Tibial artery (tissue), 4 donors: ENCODE measurements at regions of chr6 and their contacts with region 1.

Region 1: DNA sequence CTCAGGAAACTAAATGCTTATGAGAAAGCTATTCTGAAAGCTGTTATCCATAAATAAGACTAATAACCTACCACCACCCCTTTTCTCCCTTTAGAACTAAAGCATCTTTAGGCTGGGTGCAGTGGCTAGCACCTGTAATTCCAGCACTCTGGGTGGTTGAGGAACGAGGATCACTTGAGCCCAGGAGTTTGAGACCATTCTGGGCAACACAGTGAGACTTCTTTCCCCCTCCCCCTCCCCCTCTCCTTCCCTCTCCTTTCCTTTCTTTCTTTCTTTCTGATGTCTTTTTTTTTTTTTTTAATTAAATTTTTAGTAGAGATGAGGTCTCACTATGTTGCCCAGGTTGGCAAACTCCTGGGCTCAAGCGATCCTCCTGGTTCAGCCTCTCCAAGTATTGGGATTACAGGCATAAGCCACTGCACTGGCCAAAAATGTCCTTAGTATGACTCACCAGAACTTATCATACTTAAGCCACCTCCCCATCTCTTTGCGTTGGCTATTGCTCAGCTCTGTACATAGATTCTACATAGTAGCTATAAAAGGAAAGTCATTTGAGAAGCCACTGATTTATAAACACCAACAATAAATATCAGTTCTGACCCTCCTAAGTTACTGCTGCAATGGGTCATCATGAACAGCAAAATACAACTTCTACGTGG is 54.8 kb upstream of the SPDEF start:
- DNase-seq: no peak
- H3K4me3 ChIP-seq: no peak overlapping the region
- H3K27ac ChIP-seq: peak overlapping the region in 1 of 2 donors; percentile 21
- H3K4me1 ChIP-seq: peaks cover 0 to 26% (median 5%) of the 10 kb centered on the region in 4 donors
- H3K27me3 ChIP-seq: no peaks in the 10 kb centered on the region
- CTCF ChIP-seq: no peak

Region 2: GRCh38 chr6:34176261-34177031 is 434.5 kb before region 1 on chr6:
- intact Hi-C with region 1: loop called (anchors 10 kb)
- DNase-seq: no peak
- H3K4me3 ChIP-seq: no peak overlapping the region
- H3K27ac ChIP-seq: no peak overlapping the region
- H3K4me1 ChIP-seq: no peaks in the 10 kb centered on the region
- H3K27me3 ChIP-seq: peaks cover 0 to 22% of the 10 kb centered on the region in 2 donors
- CTCF ChIP-seq: no peak

Region 3: DNA sequence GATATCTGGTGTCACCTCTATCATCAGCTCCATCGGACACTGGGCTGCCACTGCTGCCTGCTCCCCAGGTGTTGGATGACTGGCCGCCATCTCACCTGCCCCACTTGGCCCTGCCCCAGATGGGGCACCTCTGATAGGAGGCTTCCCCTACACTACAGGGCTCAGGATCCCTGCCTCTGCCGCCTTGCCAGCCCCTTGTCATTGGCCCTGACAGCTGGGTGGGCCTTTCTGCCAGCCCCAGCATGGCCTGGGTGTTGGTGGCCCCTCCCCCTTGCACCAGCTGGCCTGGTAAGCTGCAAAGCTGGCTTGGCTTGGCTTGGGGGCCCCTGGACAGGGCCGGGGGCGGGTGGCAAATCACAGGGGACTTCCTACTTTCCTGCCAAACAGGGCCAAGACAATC is 134.5 kb before region 1 on chr6:
- intact Hi-C with region 1: no loop called
- DNase-seq: no peak
- H3K4me3 ChIP-seq: no peak overlapping the region
- H3K27ac ChIP-seq: no peak overlapping the region
- H3K4me1 ChIP-seq: no peaks in the 10 kb centered on the region
- H3K27me3 ChIP-seq: peaks cover 0 to 6% of the 10 kb centered on the region in 2 donors
- CTCF ChIP-seq: no peak

Region 4: GRCh38 chr6:34531580-34532201 is 79.3 kb before region 1 on chr6:
- intact Hi-C with region 1: loop called (anchors 5 kb)
- DNase-seq: peak; percentile 85 to 95
- H3K4me3 ChIP-seq: peak overlapping the region; percentile 44 to 47
- H3K27ac ChIP-seq: peak overlapping the region; percentile 57 to 76
- H3K4me1 ChIP-seq: peaks cover 0 to 6% (median 3%) of the 10 kb centered on the region in 4 donors
- H3K27me3 ChIP-seq: no peaks in the 10 kb centered on the region
- CTCF ChIP-seq: no peak